A673 (cell line): ENCODE measurements at regions of chr4 and their contacts with region 1.

Region 1: DNA sequence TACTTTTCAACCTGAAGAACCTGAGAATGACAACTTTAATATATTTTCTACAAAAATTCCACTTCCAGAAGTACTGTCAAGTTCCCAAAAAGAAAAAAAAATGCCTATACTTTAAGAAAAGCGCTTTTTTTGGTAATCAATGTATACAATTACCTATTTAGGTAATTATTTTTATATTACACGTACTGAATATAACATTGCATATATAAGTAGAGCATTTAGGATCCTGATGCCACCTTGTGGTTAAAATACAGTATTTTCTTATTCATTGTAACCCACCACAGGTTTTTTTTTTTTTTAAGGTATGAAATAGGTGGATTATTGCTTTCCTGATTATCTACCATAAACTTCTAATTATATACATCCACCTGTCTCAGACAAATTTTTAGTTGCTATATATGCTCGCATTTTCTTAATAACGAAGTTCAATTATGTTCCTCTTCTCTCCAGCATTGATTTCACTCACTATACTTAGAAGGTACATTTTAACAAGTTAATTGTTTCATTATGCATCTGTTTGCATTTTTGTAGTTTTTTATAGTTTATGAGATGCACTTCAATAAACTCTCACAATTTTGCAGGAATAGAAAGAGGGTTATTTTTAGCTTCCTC is 5.2 kb downstream of the MAP9 start:
- DNase-seq: peak; percentile 44
- H3K4me3 ChIP-seq: no peak overlapping the region
- H3K27ac ChIP-seq: no peak overlapping the region
- H3K4me1 ChIP-seq: no peaks in the 10 kb centered on the region
- H3K27me3 ChIP-seq: no peaks in the 10 kb centered on the region
- CTCF ChIP-seq: peak; percentile 66

Region 2: DNA sequence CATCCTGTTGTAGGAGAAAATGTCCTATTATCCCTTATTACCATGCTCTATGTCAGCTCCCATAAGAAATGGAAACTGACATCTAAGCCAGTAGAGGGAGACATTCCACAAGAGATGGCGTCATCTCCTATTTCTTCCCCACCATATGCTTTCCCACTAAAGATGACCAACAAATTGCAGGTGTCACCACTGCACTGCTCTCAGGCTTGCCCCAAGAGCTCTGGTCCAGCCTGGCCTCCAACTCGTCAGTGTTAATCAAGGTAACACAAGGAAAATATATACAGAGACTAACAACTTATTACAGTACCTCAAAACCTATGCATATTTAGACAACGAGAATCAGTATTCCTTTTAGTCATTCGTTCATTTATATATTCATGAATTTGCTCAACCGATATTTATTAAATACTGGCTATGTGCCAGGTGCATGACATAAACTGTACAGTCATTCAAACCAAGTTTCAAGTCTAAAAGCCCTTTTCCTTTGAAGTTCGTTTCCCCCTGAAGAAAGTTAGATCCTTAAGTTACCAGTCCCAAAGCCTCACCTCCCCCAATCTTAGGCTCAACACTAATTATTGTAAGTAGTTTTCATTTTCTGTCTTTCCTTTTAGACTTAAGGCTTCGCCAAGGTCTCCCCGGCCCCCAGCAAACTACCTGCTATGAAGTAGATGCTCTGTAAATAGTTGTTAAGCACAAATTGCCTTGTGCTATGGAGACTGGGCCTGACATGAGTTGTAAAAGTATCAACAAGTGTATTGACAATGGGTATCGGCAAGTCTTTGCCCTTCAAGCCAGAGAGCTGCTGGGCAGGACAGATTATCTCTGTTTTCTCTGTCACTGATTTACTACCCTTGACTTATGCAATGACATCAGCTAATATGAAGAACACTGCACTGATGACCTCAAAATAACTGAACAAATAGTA is 811.8 kb before region 1 on chr4:
- CTCF ChIA-PET with region 1: no interaction called
- POLR2A ChIA-PET with region 1: no interaction called
- intact Hi-C with region 1: loop called (anchors 5 kb)
- DNase-seq: peak; percentile 70
- H3K4me3 ChIP-seq: no peak overlapping the region
- H3K27ac ChIP-seq: no peak overlapping the region
- H3K4me1 ChIP-seq: no peaks in the 10 kb centered on the region
- H3K27me3 ChIP-seq: no peaks in the 10 kb centered on the region
- CTCF ChIP-seq: peak; percentile 68

Region 3: GRCh38 chr4:154807042-154807630 is 564.4 kb before region 1 on chr4:
- CTCF ChIA-PET with region 1: no interaction called
- POLR2A ChIA-PET with region 1: no interaction called
- intact Hi-C with region 1: loop called (anchors 2 kb)
- DNase-seq: peak; percentile 51
- H3K4me3 ChIP-seq: no peak overlapping the region
- H3K27ac ChIP-seq: no peak overlapping the region
- H3K4me1 ChIP-seq: no peaks in the 10 kb centered on the region
- H3K27me3 ChIP-seq: no peaks in the 10 kb centered on the region
- CTCF ChIP-seq: peak; percentile 87

Region 4: DNA sequence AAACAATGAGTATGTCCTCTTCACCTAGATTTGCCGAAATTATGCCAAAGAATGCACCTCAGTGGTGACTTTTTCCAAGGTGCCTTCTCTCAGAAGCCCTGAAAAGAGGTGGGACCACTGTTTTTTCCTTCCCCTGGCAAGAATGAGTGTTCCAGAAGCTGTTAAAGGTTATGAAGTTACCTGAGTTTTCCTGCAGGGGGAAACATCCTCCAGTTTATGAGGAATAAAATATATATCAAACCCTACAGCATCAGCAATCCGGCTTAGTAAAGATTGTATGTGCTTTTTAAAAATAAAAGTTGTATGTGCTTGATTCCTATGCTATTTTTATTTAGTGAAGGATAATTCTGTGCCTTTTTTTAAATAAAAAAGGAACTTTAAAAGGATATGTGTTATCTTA is 517.2 kb before region 1 on chr4:
- CTCF ChIA-PET with region 1: no interaction called
- POLR2A ChIA-PET with region 1: no interaction called
- intact Hi-C with region 1: loop called (anchors 1 kb)
- DNase-seq: peak; percentile 21
- H3K4me3 ChIP-seq: no peak overlapping the region
- H3K27ac ChIP-seq: no peak overlapping the region
- H3K4me1 ChIP-seq: no peaks in the 10 kb centered on the region
- H3K27me3 ChIP-seq: no peaks in the 10 kb centered on the region
- CTCF ChIP-seq: peak; percentile 39; the same call in 1 of the 2 replicates

Region 5: GRCh38 chr4:154982187-154983047 is 389.1 kb before region 1 on chr4:
- CTCF ChIA-PET with region 1: no interaction called
- POLR2A ChIA-PET with region 1: no interaction called
- intact Hi-C with region 1: loop called (anchors 5 kb)
- DNase-seq: peak; percentile 66
- H3K4me3 ChIP-seq: no peak overlapping the region
- H3K27ac ChIP-seq: no peak overlapping the region
- H3K4me1 ChIP-seq: no peaks in the 10 kb centered on the region
- H3K27me3 ChIP-seq: no peaks in the 10 kb centered on the region
- CTCF ChIP-seq: peak; percentile 81

Region 6: GRCh38 chr4:155809835-155810234 is 438.3 kb after region 1 on chr4:
- CTCF ChIA-PET with region 1: no interaction called
- POLR2A ChIA-PET with region 1: no interaction called
- intact Hi-C with region 1: no loop called
- DNase-seq: peak; percentile 90
- H3K4me3 ChIP-seq: no peak overlapping the region
- H3K27ac ChIP-seq: no peak overlapping the region
- H3K4me1 ChIP-seq: no peaks in the 10 kb centered on the region
- H3K27me3 ChIP-seq: no peaks in the 10 kb centered on the region
- CTCF ChIP-seq: peak; percentile 74